CD14-positive monocyte (primary cell): ENCODE measurements at regions of chr7 and their contacts with region 1.

Region 1: DNA sequence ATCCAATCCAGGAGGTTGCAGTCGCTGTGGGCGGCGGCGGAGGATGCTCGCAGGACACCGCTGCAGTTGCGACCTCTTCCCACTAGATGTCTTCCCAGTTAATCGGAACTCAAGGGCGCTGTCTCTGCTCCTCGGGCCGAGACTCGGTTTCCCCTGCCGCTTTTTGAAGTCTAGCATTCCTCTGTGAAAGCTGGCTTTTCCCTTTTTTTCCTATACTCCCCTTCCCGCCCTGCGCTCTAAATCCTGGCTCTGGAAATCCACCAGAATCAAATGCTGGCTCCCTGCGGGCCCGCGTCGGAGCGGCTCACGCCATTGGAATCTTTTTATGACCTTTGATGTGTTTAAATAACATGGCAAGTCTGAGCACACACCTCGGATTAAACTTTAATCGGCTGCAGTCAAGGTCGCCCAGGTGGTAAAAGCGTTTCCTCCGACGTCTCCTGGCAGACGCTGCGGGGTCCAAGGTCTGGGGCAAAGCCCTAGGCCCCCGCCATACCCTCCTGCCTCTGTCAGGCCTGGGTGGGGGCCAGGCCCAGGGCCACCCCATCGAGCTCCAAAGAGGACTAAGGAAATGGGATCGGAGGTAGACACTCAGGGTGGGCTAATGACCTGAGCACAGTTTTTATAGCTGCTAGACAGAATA is 10.7 kb upstream of the HOXA13 start:
- DNase-seq: peak in 2 of 3 donors; percentile 40 to 57
- H3K4me3 ChIP-seq: peak overlapping the region in 1 of 3 experiments; percentile 39
- H3K4me3 Mint-ChIP-seq: peak overlapping the region; percentile 58 to 89
- H3K27ac ChIP-seq: no peak overlapping the region
- H3K27ac Mint-ChIP-seq: no peak overlapping the region
- H3K4me1 ChIP-seq: peaks cover 6 to 11% of the 10 kb centered on the region in 2 donors
- H3K4me1 Mint-ChIP-seq: peaks cover 20% of the 10 kb centered on the region
- H3K27me3 ChIP-seq: peaks cover 99 to 100% of the 10 kb centered on the region in 2 donors
- H3K27me3 Mint-ChIP-seq: peaks cover 98 to 100% (median 99%) of the 10 kb centered on the region in 3 donors
- CTCF ChIP-seq: peak; percentile 92

Region 2: GRCh38 chr7:27491491-27491890 is 280.9 kb after region 1 on chr7:
- intact Hi-C with region 1: no loop called
- DNase-seq: no peak
- H3K4me3 ChIP-seq: no peak overlapping the region
- H3K4me3 Mint-ChIP-seq: no peak overlapping the region
- H3K27ac ChIP-seq: no peak overlapping the region
- H3K27ac Mint-ChIP-seq: no peak overlapping the region
- H3K4me1 ChIP-seq: no peaks in the 10 kb centered on the region
- H3K4me1 Mint-ChIP-seq: no peaks in the 10 kb centered on the region
- H3K27me3 ChIP-seq: peaks cover 0 to 3% of the 10 kb centered on the region in 2 donors
- H3K27me3 Mint-ChIP-seq: peaks cover 7 to 16% (median 16%) of the 10 kb centered on the region in 3 donors
- CTCF ChIP-seq: no peak

Region 3: DNA sequence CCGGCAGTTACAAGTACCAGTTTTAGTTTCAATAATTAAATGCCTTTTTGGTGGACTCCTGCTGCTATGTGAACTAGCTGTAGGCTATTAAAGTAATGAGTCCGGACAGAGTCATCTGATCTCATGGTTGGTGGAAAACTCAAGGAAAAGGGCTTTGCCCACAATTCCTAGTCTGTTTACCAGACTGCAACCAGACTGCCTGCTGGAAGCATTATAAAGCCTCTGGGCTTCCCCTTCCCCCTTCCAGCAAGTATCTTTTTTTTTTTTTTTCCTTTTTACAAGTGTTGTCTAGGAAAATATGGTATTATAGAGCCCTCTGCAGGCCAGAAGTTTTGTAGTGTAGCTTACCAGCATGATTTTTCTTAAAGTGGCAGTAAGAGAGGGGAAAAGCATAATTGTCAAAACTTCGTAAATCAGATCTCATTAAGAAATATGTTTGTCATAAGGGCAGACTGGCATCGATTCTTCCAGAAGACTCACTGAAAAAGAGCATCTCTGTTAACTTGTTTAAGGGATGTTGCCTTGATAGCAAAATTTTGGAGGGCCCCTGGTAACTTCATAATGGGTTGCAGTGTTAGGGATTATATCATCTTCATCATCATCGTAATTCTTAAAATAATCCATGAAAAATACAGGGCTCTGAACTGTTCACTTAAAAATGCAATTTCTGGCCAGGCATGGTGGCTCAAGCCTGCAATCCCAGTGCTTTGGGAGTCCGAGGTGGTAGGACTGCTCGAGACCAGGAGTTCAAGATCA is 710.7 kb after region 1 on chr7:
- intact Hi-C with region 1: loop called in 1 of 2 experiments (anchors 10 kb)
- DNase-seq: peak; percentile 35 to 52 (median 46)
- H3K4me3 ChIP-seq: no peak overlapping the region
- H3K4me3 Mint-ChIP-seq: no peak overlapping the region
- H3K27ac ChIP-seq: no peak overlapping the region
- H3K27ac Mint-ChIP-seq: no peak overlapping the region
- H3K4me1 ChIP-seq: no peaks in the 10 kb centered on the region
- H3K4me1 Mint-ChIP-seq: peaks cover 8% of the 10 kb centered on the region
- H3K27me3 ChIP-seq: no peaks in the 10 kb centered on the region
- H3K27me3 Mint-ChIP-seq: peaks cover 0 to 2% (median 1%) of the 10 kb centered on the region in 3 donors
- CTCF ChIP-seq: peak; percentile 61